ENCODE measurements at regions of chr1 and their contacts with region 1.

Region 1: DNA sequence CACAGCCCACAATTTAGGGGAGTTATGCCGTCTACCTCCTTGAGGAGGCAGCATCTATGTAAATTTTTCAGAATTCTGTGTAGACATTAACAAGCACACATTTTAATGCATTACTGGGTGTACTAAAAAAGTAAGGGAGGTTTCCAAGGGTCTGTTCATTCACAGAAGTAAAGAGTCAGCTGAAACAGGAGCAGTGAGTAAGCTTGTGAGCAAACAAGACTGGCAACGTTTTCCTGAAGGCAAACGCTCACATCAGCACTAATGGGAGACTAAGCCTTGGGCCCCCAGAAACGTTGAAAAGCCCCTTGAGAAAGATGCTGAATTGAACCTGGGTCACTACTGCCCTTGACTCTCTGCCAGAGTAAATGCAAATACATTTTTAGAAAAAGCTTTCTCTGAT is 25.7 kb downstream of the RPRD2 start:
- DNase-seq: no peak
- ATAC-seq: 0 out of 2 replicates have a peak, but pooled peaks have one; percentile 53
- H3K4me3 ChIP-seq: no peak overlapping the region
- H3K27ac ChIP-seq: no peak overlapping the region
- H3K4me1 ChIP-seq: peaks cover 20% of the 10 kb centered on the region
- H3K27me3 ChIP-seq: no peaks in the 10 kb centered on the region
- CTCF ChIP-seq: no peak

Region 2: GRCh38 chr1:150363426-150364230 is 26.0 kb before region 1 on chr1 and contains the start of gene RPRD2:
- CTCF ChIA-PET with region 1: no interaction called
- POLR2A ChIA-PET with region 1: no interaction called
- in situ Hi-C with region 1: no loop called
- intact Hi-C with region 1: no loop called
- DNase-seq: peak; percentile 96
- ATAC-seq: peak; percentile 96
- H3K4me3 ChIP-seq: peak within 1 kb of the TSS; percentile 92 to 99
- H3K27ac ChIP-seq: peak within 1 kb of the TSS; percentile 99
- H3K4me1 ChIP-seq: peaks cover 6% of the 10 kb centered on the region; the same call in 1 of the 2 replicates
- H3K27me3 ChIP-seq: no peaks in the 10 kb centered on the region
- CTCF ChIP-seq: no peak
- total RNA-seq, gene RPRD2: 28.3 TPM

Region 3: DNA sequence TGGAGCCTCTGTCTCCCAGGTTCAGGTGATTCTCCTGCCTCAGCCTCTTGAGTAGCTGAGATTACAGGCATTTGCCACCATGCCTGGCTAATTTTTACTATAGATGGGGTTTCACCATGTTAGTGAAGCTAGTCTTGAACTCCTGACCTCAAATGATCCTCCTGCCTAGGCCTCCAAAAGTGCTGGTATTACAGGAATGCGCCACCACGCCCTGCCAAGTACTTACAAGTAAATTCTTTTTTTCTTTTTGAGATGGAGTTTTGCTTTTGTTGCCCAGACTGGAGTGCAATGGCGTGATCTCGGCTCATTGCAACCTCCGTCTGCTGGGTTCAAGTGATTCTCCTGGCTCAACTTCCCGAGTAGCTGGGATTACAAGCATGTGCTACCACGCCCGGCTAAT is 16.8 kb after region 1 on chr1:
- CTCF ChIA-PET with region 1: interaction called, 16 read pairs
- POLR2A ChIA-PET with region 1: no interaction called
- in situ Hi-C with region 1: no loop called
- intact Hi-C with region 1: no loop called
- DNase-seq: no peak
- ATAC-seq: no peak
- H3K4me3 ChIP-seq: no peak overlapping the region
- H3K27ac ChIP-seq: no peak overlapping the region
- H3K4me1 ChIP-seq: peaks cover 10% of the 10 kb centered on the region
- H3K27me3 ChIP-seq: no peaks in the 10 kb centered on the region
- CTCF ChIP-seq: no peak

Region 4: DNA sequence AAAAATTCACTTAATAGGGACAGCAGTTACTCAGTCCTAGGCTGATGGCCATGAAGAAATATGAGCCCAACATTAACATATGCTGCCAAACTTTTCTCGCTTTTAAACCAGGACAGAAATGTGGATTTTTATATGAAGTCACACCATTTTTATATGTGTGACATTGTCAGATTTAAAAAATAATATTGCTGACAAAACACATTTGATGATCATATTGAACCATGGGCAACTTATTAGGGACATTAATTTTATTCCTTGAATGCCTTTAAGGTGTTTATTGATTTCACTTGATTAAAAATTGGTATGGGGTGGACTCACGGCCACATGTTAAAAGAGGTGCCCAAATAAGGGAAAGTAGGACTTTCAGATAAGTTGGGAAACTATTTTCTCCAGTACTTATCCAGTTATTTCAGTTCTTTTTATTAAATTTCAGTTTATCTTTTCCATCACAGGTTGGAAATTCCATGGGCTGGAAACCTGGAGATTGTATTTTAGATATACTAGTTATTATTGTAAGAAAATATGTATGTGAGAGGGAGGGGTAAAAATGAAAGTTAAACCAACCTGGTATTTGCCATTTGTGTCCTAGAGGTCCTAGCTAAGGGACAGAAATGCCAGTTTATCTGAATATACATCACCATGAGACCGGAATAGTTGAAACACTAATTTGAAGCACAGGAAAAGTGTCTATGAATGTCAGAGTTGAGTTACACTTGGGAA is 33.1 kb after region 1 on chr1:
- CTCF ChIA-PET with region 1: no interaction called
- POLR2A ChIA-PET with region 1: interaction called, 11 read pairs
- in situ Hi-C with region 1: no loop called
- intact Hi-C with region 1: no loop called
- DNase-seq: no peak
- ATAC-seq: no peak
- H3K4me3 ChIP-seq: no peak overlapping the region
- H3K27ac ChIP-seq: no peak overlapping the region
- H3K4me1 ChIP-seq: no peaks in the 10 kb centered on the region
- H3K27me3 ChIP-seq: no peaks in the 10 kb centered on the region
- CTCF ChIP-seq: no peak